Activated naive CD4-positive, alpha-beta T cell treated with anti-CD3 and anti-CD28 coated beads for 36 hours (primary cell): ENCODE measurements at regions of chr1 and their contacts with region 1.

Region 1: GRCh38 chr1:204286831-204287421 is 72.8 kb downstream of the PLEKHA6 start:
- DNase-seq: peak; percentile 42
- H3K4me3 Mint-ChIP-seq: peak overlapping the region; percentile 65
- H3K27ac Mint-ChIP-seq: peak overlapping the region; percentile 68
- H3K4me1 Mint-ChIP-seq: peaks cover 20% of the 10 kb centered on the region
- H3K27me3 Mint-ChIP-seq: peaks cover 5% of the 10 kb centered on the region

Region 2: GRCh38 chr1:204323887-204324286 is 37.0 kb after region 1 on chr1:
- CTCF ChIA-PET with region 1: no interaction called
- intact Hi-C with region 1: loop called (anchors 2 kb)
- DNase-seq: peak; percentile 88
- H3K4me3 Mint-ChIP-seq: no peak overlapping the region
- H3K27ac Mint-ChIP-seq: peak overlapping the region; percentile 59
- H3K4me1 Mint-ChIP-seq: peaks cover 22% of the 10 kb centered on the region
- H3K27me3 Mint-ChIP-seq: no peaks in the 10 kb centered on the region